K562 (cell line): ENCODE measurements at regions of chr10 and their contacts with region 1.

Region 1: DNA sequence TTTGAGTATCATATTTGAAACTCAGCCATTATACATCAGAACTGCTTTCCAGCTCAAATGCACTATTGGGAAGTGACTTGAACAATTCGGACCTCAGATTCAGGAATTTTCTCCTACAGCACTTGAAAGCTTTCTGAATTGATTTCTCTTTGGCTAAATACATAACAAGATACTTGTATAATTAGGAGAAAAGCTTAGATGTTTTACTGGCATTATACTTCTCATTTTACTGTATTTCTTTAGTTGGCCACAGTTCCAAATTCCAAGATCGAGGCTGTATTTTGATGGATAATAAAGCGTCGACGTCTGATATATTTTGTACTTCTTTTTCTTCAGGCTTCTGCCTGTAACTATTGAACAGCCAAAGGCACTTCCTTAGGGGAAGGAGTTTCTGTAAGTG is 26.7 kb upstream of the LYZL2 start:
- DNase-seq: no peak
- ATAC-seq: no peak
- H3K4me3 ChIP-seq: no peak overlapping the region
- H3K27ac ChIP-seq: no peak overlapping the region
- H3K4me1 ChIP-seq: no peaks in the 10 kb centered on the region
- H3K27me3 ChIP-seq: peaks cover 6 to 10% of the 10 kb centered on the region in 2 experiments; a peak in 4 of 5 replicates
- CTCF ChIP-seq: no peak
- EP300 ChIP-seq: no peak
- POLR2A ChIP-seq: no peak
- RAD21 ChIP-seq: no peak

Region 2: GRCh38 chr10:29569795-29570194 is 1086.4 kb before region 1 on chr10:
- CTCF ChIA-PET with region 1: no interaction called
- POLR2A ChIA-PET with region 1: no interaction called
- in situ Hi-C with region 1: loop called (anchors 5 kb)
- intact Hi-C with region 1: no loop called
- DNase-seq: no peak
- ATAC-seq: no peak
- H3K4me3 ChIP-seq: no peak overlapping the region
- H3K27ac ChIP-seq: no peak overlapping the region
- H3K4me1 ChIP-seq: no peaks in the 10 kb centered on the region
- H3K27me3 ChIP-seq: no peaks in the 10 kb centered on the region; a peak in 2 of 5 replicates
- CTCF ChIP-seq: no peak
- EP300 ChIP-seq: no peak
- POLR2A ChIP-seq: no peak
- RAD21 ChIP-seq: no peak